AG04449 (cell line): ENCODE measurements at regions of chr11 and their contacts with region 1.

Region 1: GRCh38 chr11:83819933-83820549 is 533.9 kb upstream of the CCDC90B start:
- DNase-seq: peak; percentile 26
- H3K4me3 ChIP-seq: no peak overlapping the region
- CTCF ChIP-seq: peak; percentile 35

Region 2: GRCh38 chr11:82682003-82682751 is 1137.9 kb before region 1 on chr11:
- CTCF ChIA-PET with region 1: interaction called, 10 read pairs
- POLR2A ChIA-PET with region 1: no interaction called
- DNase-seq: peak; percentile 21
- H3K4me3 ChIP-seq: no peak overlapping the region
- CTCF ChIP-seq: peak; percentile 57

Region 3: GRCh38 chr11:82718307-82718706 is 1101.7 kb before region 1 on chr11:
- CTCF ChIA-PET with region 1: interaction called, 102 read pairs
- POLR2A ChIA-PET with region 1: no interaction called
- DNase-seq: peak; percentile 7
- H3K4me3 ChIP-seq: no peak overlapping the region
- CTCF ChIP-seq: peak; percentile 58

Region 4: DNA sequence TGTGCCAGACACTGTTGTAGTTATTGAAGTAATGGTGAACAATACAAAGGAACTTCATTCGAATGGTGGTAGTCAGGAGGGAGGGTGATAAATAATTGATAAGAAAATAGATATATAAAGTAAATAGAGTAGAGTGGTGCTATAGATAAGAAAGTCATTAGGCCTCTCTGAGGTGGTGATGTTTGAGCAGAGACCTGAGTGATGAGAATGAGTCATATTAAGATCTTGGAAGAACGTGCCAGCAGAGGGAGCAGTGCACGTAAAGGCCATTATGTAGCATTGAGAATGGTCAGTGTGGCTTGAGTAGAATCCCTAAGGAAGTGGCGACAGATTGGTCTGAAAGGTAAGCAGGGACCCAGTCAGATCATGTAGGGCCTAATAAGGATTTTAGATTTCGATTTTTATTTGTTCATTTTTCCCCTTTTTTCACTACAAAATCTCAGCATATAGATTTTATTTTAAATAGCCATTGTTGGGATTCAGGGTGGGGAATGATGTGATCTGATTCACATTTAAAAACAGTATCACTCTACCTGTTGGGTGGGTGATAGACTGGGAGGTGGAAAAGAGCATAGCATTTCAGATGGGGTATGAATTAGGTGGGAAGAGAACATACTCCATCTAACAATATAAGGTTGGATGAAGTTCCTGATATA is 578.6 kb before region 1 on chr11:
- CTCF ChIA-PET with region 1: interaction called, 33 read pairs
- POLR2A ChIA-PET with region 1: no interaction called
- DNase-seq: no peak
- H3K4me3 ChIP-seq: no peak overlapping the region
- CTCF ChIP-seq: peak; percentile 61

Region 5: GRCh38 chr11:83285771-83286528 is 534.1 kb before region 1 on chr11 and contains the start of gene CCDC90B:
- CTCF ChIA-PET with region 1: interaction called, 369 read pairs
- POLR2A ChIA-PET with region 1: interaction called, 3 read pairs
- DNase-seq: peak; percentile 84
- H3K4me3 ChIP-seq: peak within 1 kb of the TSS; percentile 94
- CTCF ChIP-seq: no peak

Region 6: DNA sequence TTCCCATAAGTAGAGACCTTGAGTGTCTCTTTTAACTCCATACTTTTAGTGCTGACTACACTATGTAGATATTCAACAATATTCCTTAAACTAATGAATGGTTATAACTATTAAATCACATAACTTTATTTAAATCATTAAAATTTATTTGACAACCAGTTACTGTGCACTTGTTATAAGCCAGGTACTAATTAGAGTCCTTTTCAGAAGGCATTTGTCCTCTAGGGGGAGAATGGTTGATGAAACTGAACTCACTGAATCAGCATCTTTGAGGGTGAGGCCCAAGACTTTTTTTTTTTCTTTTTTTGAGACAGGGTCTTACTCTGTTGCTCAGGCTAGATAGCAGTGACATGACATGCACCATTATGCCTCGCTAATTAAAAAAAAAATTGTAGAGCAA is 18.3 kb before region 1 on chr11:
- CTCF ChIA-PET with region 1: interaction called, 24 read pairs
- POLR2A ChIA-PET with region 1: no interaction called
- DNase-seq: no peak
- H3K4me3 ChIP-seq: no peak overlapping the region
- CTCF ChIP-seq: no peak

Region 7: GRCh38 chr11:83951474-83951873 is 131.4 kb after region 1 on chr11:
- CTCF ChIA-PET with region 1: no interaction called
- POLR2A ChIA-PET with region 1: no interaction called
- DNase-seq: no peak
- H3K4me3 ChIP-seq: no peak overlapping the region
- CTCF ChIP-seq: no peak

Region 8: GRCh38 chr11:84871116-84871515 is 1051.1 kb after region 1 on chr11:
- CTCF ChIA-PET with region 1: no interaction called
- POLR2A ChIA-PET with region 1: no interaction called
- DNase-seq: no peak
- H3K4me3 ChIP-seq: no peak overlapping the region
- CTCF ChIP-seq: no peak